B cell (primary cell): ENCODE measurements at regions of chr14 and their contacts with region 1.

Region 1: GRCh38 chr14:76941946-76942805 is 86.3 kb downstream of the IRF2BPL start:
- DNase-seq: no peak
- ATAC-seq: no peak
- H3K4me3 ChIP-seq: no peak overlapping the region
- H3K4me3 Mint-ChIP-seq: no peak overlapping the region
- H3K27ac ChIP-seq: no peak overlapping the region
- H3K27ac Mint-ChIP-seq: no peak overlapping the region
- H3K4me1 ChIP-seq: peaks cover 5% of the 10 kb centered on the region in 2 donors
- H3K4me1 Mint-ChIP-seq: peaks cover 5% of the 10 kb centered on the region
- H3K27me3 ChIP-seq: no peaks in the 10 kb centered on the region
- H3K27me3 Mint-ChIP-seq: no peaks in the 10 kb centered on the region
- CTCF ChIP-seq: no peak

Region 2: DNA sequence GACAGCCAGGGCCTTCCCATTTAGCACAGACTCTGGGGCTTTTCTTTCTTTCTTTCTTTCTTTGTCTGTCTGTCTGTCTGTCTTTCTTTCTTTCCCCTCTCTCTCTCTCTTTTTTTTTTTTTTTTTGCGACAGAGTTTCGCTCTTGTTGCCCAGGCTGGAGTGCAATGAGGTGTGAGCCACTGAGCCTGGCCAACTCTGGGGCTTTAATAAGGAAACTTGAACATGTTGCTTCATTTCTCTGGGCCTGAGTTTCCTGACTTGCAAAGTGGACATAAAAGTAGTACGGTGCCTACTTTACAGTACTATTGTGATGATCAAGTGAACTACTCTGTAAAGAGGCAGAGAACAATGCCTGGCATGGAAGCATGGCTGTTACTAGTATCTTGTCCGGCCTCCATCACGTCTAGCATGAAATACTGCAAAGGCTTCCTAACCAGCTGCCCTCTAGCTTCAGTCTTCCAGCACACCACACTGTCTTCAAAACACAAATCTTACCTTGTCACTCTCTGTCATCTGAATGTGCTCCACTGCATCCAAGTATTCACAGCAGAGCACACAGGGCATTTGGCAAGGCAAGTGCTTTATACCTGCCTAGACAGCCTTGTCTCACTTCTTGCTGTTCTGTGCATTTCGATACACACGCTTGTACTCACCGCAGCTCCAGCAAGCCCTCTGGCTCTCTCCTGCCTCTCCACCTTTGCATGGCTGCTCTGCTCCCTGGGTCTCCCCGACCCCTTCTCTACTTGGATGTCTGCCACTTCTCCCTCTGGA is 10.4 kb before region 1 on chr14:
- CTCF ChIA-PET with region 1: interaction called, 11 read pairs
- POLR2A ChIA-PET with region 1: no interaction called
- intact Hi-C with region 1: no loop called
- DNase-seq: no peak
- ATAC-seq: no peak
- H3K4me3 ChIP-seq: no peak overlapping the region
- H3K4me3 Mint-ChIP-seq: no peak overlapping the region
- H3K27ac ChIP-seq: no peak overlapping the region
- H3K27ac Mint-ChIP-seq: no peak overlapping the region
- H3K4me1 ChIP-seq: peaks cover 13 to 21% of the 10 kb centered on the region in 2 donors
- H3K4me1 Mint-ChIP-seq: peaks cover 28% of the 10 kb centered on the region
- H3K27me3 ChIP-seq: peaks cover 0 to 3% (median 0%) of the 10 kb centered on the region in 4 experiments
- H3K27me3 Mint-ChIP-seq: no peaks in the 10 kb centered on the region
- CTCF ChIP-seq: no peak